HepG2 (cell line): ENCODE measurements at regions of chr15 and their contacts with region 1.

Region 1: DNA sequence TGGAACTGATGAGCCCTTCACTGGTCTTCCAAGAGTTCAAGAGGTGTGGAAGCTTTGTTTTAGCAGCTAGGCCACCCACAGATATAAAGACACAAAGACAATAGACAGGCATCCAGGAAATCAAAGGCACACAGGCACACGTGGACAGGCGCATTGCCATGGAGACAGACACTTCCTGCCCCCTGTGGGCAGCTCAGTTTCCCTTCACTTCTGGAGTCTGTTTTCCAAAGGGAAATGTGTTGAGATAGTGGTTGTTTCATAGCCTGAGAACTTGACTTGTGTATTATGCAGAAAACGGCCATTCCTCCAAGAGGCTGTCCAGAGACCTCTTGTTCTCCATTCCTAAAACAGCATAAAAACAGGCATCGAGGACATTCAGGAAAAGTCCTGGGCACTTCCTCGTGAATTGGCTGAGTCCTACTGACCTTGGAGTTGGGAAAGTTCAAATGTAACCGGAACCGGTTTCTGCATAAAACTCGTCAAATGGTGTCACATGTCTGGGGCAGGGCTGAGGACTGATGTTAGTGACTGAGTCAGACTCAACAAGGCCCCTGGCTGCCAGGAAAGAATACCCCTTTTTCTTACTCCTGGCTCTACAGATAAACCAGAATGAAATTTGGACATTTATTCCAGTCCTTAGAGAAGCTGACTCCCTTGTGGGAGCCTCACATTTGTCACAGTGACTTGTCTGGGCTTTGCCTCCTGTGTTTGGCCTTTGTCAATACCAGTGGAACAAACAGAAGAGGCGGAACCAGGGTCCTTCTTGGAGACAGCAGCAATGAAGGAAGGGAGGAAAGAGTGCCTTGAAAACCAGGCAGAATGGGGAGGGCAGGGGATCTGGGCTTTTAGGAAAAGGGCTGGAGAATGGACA is 1.3 kb downstream of the ALPK3 start:
- DNase-seq: peak; percentile 74
- ATAC-seq: peak; percentile 56
- H3K4me3 ChIP-seq: peak overlapping the region; percentile 2 to 45 (median 12); a peak in 4 of 6 replicates
- H3K27ac ChIP-seq: peak overlapping the region; percentile 28
- H3K4me1 ChIP-seq: peaks cover 59% of the 10 kb centered on the region
- H3K27me3 ChIP-seq: no peaks in the 10 kb centered on the region
- CTCF ChIP-seq: peak; percentile 34; the same call in 1 of the 2 replicates
- EP300 ChIP-seq: peak in 1 of 2 experiments; percentile 22; a peak in 1 of 4 replicates
- POLR2A ChIP-seq: no peak
- RAD21 ChIP-seq: no peak

Region 2: DNA sequence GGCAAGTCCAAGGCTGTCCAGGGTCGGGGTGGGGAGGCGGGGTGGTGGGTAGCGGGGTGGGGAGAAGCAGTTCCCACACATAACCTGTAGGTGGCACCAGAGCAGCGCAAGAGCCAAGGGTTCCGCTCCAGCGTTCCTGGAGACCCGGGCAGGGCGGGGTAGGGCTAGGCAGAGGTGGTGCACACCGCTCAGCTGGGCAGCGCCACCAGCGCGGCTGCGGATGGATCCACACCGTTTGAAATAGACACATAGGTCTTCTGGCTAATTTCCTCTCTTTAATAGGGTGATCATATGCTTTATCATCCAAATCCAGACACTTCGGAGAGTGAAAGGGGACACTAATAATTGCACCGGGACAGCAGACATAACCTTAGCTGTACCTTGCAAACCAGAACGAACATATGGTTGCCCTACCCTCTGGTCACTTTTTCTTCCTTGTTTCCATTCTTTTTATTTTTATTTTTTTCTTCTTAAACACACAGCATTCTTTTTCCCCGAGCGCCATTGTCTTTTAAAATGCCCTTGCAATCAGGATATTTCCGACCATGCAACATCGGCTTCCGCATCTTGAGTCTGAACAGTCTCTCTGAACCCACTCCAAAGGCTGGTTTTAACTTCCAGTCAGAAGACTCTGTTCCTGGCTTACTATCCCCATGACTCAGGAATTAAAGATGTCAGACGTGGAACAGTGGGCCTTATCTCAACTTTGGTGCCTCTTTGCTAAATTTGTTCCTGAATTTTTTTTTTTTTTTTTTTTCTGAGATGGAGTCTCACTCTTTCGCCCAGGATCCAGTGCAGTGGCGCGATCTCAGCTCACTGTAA is 230.2 kb before region 1 on chr15:
- CTCF ChIA-PET with region 1: no interaction called
- POLR2A ChIA-PET with region 1: no interaction called
- in situ Hi-C with region 1: loop called (anchors 10 kb)
- intact Hi-C with region 1: loop called (anchors 2 kb)
- DNase-seq: peak; percentile 83
- ATAC-seq: peak; percentile 100
- H3K4me3 ChIP-seq: peak overlapping the region; percentile 41 to 62 (median 50)
- H3K27ac ChIP-seq: no peak overlapping the region
- H3K4me1 ChIP-seq: peaks cover 27% of the 10 kb centered on the region
- H3K27me3 ChIP-seq: no peaks in the 10 kb centered on the region; a peak in 2 of 5 replicates
- CTCF ChIP-seq: peak; percentile 89
- EP300 ChIP-seq: no peak
- POLR2A ChIP-seq: no peak
- RAD21 ChIP-seq: peak; percentile 93